Caco-2 (cell line): ENCODE measurements at regions of chr6 and their contacts with region 1.

Region 1: GRCh38 chr6:31356946-31357466 is at the start of gene HLA-B:
- DNase-seq: peak in 1 of 2 experiments; percentile 15
- H3K4me3 ChIP-seq: peak within 1 kb of the TSS; percentile 35
- H3K4me3 Mint-ChIP-seq: peak within 1 kb of the TSS; percentile 70
- H3K27ac Mint-ChIP-seq: no peak within 1 kb of the TSS
- H3K4me1 ChIP-seq: no peaks in the 10 kb centered on the region
- H3K4me1 Mint-ChIP-seq: no peaks in the 10 kb centered on the region
- H3K27me3 ChIP-seq: no peaks in the 10 kb centered on the region
- H3K27me3 Mint-ChIP-seq: peaks cover 35% of the 10 kb centered on the region
- CTCF ChIP-seq: no peak
- total RNA-seq, gene HLA-B: 40.9 and 41.9 TPM in 2 replicates

Region 2: DNA sequence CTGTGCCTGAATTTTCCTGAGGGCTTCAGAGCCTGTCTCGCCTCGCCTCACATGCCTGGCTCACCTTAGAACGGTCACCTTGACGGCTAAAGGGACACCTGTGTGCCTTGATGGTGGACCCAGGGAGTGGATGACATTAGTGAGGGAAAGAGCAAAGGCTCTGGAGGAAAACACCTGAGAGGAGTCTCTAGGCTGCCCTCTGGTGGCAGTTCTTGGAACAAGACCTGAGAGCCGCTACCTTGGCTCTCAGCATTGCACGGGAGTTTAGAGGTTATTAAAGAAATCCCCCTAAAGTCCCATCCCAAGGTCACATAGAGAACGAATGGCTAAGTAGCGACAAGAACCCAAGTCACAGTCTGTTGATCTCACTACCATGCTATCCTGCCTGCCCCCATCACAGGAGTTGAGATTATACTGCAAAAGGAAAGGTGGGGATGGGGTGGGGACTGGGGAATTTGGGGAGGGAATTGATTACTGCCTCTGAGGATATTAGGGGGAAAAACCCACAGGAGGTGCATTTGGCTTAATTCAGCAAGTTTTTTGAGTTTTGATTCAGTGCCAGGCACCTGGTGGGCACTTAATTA is 228.8 kb before region 1 on chr6:
- CTCF ChIA-PET with region 1: no interaction called
- POLR2A ChIA-PET with region 1: no interaction called
- intact Hi-C with region 1: no loop called
- DNase-seq: peak; percentile 68 to 77
- H3K4me3 ChIP-seq: no peak overlapping the region
- H3K4me3 Mint-ChIP-seq: no peak overlapping the region
- H3K27ac Mint-ChIP-seq: no peak overlapping the region
- H3K4me1 ChIP-seq: no peaks in the 10 kb centered on the region
- H3K4me1 Mint-ChIP-seq: peaks cover 17% of the 10 kb centered on the region
- H3K27me3 ChIP-seq: no peaks in the 10 kb centered on the region
- H3K27me3 Mint-ChIP-seq: peaks cover 6% of the 10 kb centered on the region
- CTCF ChIP-seq: peak; percentile 75 to 89

Region 3: GRCh38 chr6:31271641-31272357 is 85.2 kb before region 1 on chr6 and contains the start of gene HLA-C:
- CTCF ChIA-PET with region 1: no interaction called
- POLR2A ChIA-PET with region 1: no interaction called
- intact Hi-C with region 1: loop called (anchors 10 kb)
- DNase-seq: peak; percentile 86 to 89
- H3K4me3 ChIP-seq: peak within 1 kb of the TSS; percentile 54
- H3K4me3 Mint-ChIP-seq: peak within 1 kb of the TSS; percentile 79
- H3K27ac Mint-ChIP-seq: peak within 1 kb of the TSS; percentile 81
- H3K4me1 ChIP-seq: no peaks in the 10 kb centered on the region
- H3K4me1 Mint-ChIP-seq: peaks cover 12% of the 10 kb centered on the region
- H3K27me3 ChIP-seq: no peaks in the 10 kb centered on the region
- H3K27me3 Mint-ChIP-seq: peaks cover 12% of the 10 kb centered on the region
- CTCF ChIP-seq: no peak
- total RNA-seq, gene HLA-C: 143 and 149 TPM in 2 replicates